Calu3 (cell line): ENCODE measurements at regions of chr7 and their contacts with region 1.

Region 1: GRCh38 chr7:30379131-30379530 is 94.7 kb downstream of the ZNRF2 start:
- DNase-seq: no peak
- H3K4me3 Mint-ChIP-seq: no peak overlapping the region
- H3K27ac Mint-ChIP-seq: no peak overlapping the region
- H3K4me1 Mint-ChIP-seq: peaks cover 17% of the 10 kb centered on the region
- H3K27me3 Mint-ChIP-seq: no peaks in the 10 kb centered on the region
- CTCF ChIP-seq: no peak

Region 2: GRCh38 chr7:30301751-30302150 is 77.4 kb before region 1 on chr7:
- CTCF ChIA-PET with region 1: interaction called, 10 read pairs
- intact Hi-C with region 1: no loop called
- DNase-seq: no peak
- H3K4me3 Mint-ChIP-seq: no peak overlapping the region
- H3K27ac Mint-ChIP-seq: no peak overlapping the region
- H3K4me1 Mint-ChIP-seq: peaks cover 38% of the 10 kb centered on the region
- H3K27me3 Mint-ChIP-seq: no peaks in the 10 kb centered on the region
- CTCF ChIP-seq: no peak

Region 3: GRCh38 chr7:30406664-30407425 is 27.7 kb after region 1 on chr7:
- CTCF ChIA-PET with region 1: no interaction called
- intact Hi-C with region 1: no loop called
- DNase-seq: no peak
- H3K4me3 Mint-ChIP-seq: no peak overlapping the region
- H3K27ac Mint-ChIP-seq: no peak overlapping the region
- H3K4me1 Mint-ChIP-seq: no peaks in the 10 kb centered on the region
- H3K27me3 Mint-ChIP-seq: no peaks in the 10 kb centered on the region
- CTCF ChIP-seq: no peak